ENCODE measurements at regions of chr19 and their contacts with region 1.

Region 1: GRCh38 chr19:6862673-6863078 is 24.7 kb upstream of the ADGRE1 start:
- DNase-seq: peak; percentile 78
- H3K4me3 ChIP-seq: no peak overlapping the region
- H3K27ac ChIP-seq: no peak overlapping the region
- H3K4me1 ChIP-seq: no peaks in the 10 kb centered on the region
- H3K27me3 ChIP-seq: no peaks in the 10 kb centered on the region
- CTCF ChIP-seq: peak; percentile 90 to 95
- POLR2A ChIP-seq: no peak

Region 2: DNA sequence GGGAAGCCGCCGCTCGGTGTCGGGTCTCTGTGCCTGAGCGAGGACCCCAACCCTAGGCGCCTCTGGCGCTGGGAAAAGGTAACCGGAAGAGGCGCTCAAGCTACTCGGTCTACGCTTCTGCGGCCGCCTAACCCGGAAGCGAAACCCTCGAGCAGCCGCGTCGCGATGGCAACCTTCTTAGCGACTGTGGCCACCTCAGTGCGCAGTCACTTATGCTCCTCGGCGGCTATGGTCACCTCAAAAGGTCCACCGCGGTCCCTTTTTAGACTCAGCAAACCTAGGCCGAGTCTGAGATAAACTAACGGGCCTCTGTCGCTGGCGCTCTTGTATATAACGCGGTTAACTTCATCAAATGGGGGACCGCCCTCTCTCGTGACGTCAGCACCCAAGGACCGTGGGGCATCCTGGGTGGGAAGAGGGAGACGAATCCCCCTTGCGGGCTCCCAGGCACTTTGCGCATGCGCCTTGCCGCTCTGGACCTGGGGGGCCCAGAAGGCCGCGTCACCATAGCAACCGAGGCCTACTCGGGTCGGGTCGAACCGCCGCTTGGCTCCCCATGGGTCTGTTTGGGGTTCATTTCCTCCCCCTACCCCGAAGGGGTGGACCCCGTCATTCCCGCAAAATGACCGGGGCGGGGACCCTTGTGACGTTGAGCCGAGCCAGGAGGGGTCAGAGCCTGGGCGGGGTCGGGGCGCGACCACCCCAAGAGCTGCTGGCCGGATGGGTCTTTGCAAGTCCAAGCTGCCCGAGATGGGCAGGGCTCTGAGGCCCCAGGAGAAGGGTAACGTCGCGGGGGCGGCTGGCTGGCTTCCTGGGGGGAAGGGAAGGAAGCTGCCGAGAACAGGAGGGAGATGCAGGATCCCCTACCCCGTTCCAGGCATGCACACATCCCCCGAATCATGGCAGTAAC is 469.3 kb before region 1 on chr19 and contains the start of gene GTF2F1:
- CTCF ChIA-PET with region 1: no interaction called
- POLR2A ChIA-PET with region 1: no interaction called
- dilution Hi-C with region 1: no loop called
- intact Hi-C with region 1: loop called (anchors 2 kb)
- DNase-seq: peak; percentile 92
- H3K4me3 ChIP-seq: peak within 1 kb of the TSS; percentile 42 to 77 (median 74)
- H3K27ac ChIP-seq: peak within 1 kb of the TSS; percentile 77
- H3K4me1 ChIP-seq: peaks cover 7% of the 10 kb centered on the region
- H3K27me3 ChIP-seq: no peaks in the 10 kb centered on the region
- CTCF ChIP-seq: peak in 1 of 2 donors; percentile 9
- POLR2A ChIP-seq: peak; percentile 75
- total RNA-seq, gene GTF2F1: 56.4 and 58.2 TPM in 2 replicates

Region 3: DNA sequence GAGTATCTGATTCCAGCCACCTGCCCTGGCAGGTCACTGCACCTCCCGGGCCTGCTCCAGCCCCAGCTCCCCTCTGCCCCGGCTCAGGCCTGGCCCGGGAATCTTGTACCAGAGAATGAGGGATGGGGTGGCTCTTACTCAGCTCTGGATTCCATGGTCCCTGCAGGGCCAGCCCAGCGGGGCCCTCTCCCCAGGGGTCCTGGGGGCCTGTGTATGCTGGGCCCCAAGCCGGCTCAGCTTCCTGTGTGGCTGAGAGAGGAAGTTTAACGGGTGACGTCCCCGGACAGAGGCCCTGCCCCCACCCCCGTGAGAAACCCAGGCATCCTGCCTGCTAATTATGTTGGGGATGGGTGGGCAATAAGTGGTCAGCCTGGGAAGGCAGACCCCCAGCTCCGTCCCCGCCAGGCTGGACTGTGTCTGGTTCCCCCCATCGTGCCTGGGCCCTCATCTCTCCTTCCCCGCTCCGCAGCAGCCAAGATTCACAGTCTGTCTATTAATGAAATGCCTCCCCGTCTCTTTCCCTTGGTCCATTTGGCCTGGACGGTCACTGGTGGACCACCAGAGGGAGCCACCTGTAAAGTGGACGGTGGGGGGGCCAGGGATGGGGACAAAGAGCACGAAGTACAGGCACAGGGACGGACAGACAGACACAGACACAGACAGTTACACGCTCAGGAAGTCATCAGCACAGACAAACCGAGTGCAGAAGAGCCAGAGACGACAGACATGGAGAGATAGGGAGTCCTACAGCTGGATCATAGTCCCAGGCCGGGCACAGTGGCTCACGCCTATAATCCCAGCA is 380.9 kb before region 1 on chr19 and contains the start of gene DENND1C:
- CTCF ChIA-PET with region 1: interaction called, 5 read pairs
- POLR2A ChIA-PET with region 1: no interaction called
- dilution Hi-C with region 1: no loop called
- intact Hi-C with region 1: loop called (anchors 2 kb)
- DNase-seq: peak; percentile 12
- H3K4me3 ChIP-seq: no peak within 1 kb of the TSS
- H3K27ac ChIP-seq: no peak within 1 kb of the TSS
- H3K4me1 ChIP-seq: no peaks in the 10 kb centered on the region
- H3K27me3 ChIP-seq: no peaks in the 10 kb centered on the region
- CTCF ChIP-seq: peak; percentile 67 to 71
- POLR2A ChIP-seq: no peak
- total RNA-seq, gene DENND1C: not detected in 2 replicates

Region 4: DNA sequence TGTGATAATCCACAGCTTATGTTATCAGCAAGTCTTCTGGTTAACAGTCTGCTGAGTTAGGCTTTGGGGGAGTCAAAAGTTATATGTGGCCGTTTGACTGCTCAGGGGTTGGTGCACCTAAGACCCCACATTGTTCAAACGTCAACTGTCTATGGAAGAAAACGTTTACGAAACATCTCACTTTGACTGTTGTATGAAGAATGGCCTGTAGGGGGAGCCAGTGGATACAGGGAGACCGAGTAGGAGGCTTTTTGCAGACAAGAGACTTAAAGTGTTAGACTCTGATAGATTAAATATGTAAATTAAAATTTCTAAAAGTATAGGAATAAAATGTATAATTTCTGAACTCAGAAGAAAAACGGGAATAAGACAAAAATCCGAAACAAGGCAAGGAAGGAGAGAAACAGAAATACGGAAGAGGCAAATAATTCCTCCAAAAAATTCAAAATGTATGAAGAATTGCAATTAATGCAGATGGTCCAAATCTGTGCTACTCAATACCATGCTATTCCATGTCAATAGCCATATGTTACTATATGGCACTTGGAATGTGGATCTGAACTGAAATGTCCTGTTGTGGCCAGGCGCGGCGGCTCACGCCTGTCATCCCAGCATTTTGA is 230.6 kb before region 1 on chr19:
- CTCF ChIA-PET with region 1: interaction called, 22 read pairs
- POLR2A ChIA-PET with region 1: no interaction called
- dilution Hi-C with region 1: no loop called
- intact Hi-C with region 1: loop called (anchors 1 kb)
- DNase-seq: peak; percentile 85
- H3K4me3 ChIP-seq: no peak overlapping the region
- H3K27ac ChIP-seq: no peak overlapping the region
- H3K4me1 ChIP-seq: no peaks in the 10 kb centered on the region
- H3K27me3 ChIP-seq: no peaks in the 10 kb centered on the region
- CTCF ChIP-seq: peak; percentile 72 to 79
- POLR2A ChIP-seq: no peak

Region 5: GRCh38 chr19:6767357-6768235 is 95.1 kb before region 1 on chr19 and contains the start of gene SH2D3A:
- CTCF ChIA-PET with region 1: interaction called, 21 read pairs
- POLR2A ChIA-PET with region 1: interaction called, 4 read pairs
- dilution Hi-C with region 1: no loop called
- intact Hi-C with region 1: loop called (anchors 1 kb)
- DNase-seq: peak; percentile 37
- H3K4me3 ChIP-seq: peak within 1 kb of the TSS in 1 of 3 experiments; percentile 4
- H3K27ac ChIP-seq: no peak within 1 kb of the TSS
- H3K4me1 ChIP-seq: peaks cover 4% of the 10 kb centered on the region
- H3K27me3 ChIP-seq: peaks cover 5 to 9% of the 10 kb centered on the region in 2 experiments
- CTCF ChIP-seq: no peak
- POLR2A ChIP-seq: no peak
- total RNA-seq, gene SH2D3A: 0.53 TPM in 1 of 2 replicates, not detected in the other

Region 6: GRCh38 chr19:6852001-6852400 is 10.7 kb before region 1 on chr19:
- CTCF ChIA-PET with region 1: interaction called, 12 read pairs
- POLR2A ChIA-PET with region 1: interaction called, 3 read pairs
- dilution Hi-C with region 1: no loop called
- intact Hi-C with region 1: no loop called
- DNase-seq: no peak
- H3K4me3 ChIP-seq: no peak overlapping the region
- H3K27ac ChIP-seq: no peak overlapping the region
- H3K4me1 ChIP-seq: no peaks in the 10 kb centered on the region
- H3K27me3 ChIP-seq: no peaks in the 10 kb centered on the region
- CTCF ChIP-seq: no peak
- POLR2A ChIP-seq: no peak